Activated CD4-positive, alpha-beta T cell treated with anti-CD3 and anti-CD28 coated beads for 36 hours (primary cell): ENCODE measurements at regions of chr7 and their contacts with region 1.

Region 1: GRCh38 chr7:39732837-39733804 is 109.7 kb downstream of the RALA start:
- DNase-seq: peak; percentile 99
- ATAC-seq: peak; percentile 93
- H3K4me3 Mint-ChIP-seq: peak overlapping the region; percentile 88
- H3K27ac Mint-ChIP-seq: peak overlapping the region; percentile 93
- H3K4me1 Mint-ChIP-seq: peaks cover 31% of the 10 kb centered on the region
- H3K27me3 Mint-ChIP-seq: no peaks in the 10 kb centered on the region

Region 2: DNA sequence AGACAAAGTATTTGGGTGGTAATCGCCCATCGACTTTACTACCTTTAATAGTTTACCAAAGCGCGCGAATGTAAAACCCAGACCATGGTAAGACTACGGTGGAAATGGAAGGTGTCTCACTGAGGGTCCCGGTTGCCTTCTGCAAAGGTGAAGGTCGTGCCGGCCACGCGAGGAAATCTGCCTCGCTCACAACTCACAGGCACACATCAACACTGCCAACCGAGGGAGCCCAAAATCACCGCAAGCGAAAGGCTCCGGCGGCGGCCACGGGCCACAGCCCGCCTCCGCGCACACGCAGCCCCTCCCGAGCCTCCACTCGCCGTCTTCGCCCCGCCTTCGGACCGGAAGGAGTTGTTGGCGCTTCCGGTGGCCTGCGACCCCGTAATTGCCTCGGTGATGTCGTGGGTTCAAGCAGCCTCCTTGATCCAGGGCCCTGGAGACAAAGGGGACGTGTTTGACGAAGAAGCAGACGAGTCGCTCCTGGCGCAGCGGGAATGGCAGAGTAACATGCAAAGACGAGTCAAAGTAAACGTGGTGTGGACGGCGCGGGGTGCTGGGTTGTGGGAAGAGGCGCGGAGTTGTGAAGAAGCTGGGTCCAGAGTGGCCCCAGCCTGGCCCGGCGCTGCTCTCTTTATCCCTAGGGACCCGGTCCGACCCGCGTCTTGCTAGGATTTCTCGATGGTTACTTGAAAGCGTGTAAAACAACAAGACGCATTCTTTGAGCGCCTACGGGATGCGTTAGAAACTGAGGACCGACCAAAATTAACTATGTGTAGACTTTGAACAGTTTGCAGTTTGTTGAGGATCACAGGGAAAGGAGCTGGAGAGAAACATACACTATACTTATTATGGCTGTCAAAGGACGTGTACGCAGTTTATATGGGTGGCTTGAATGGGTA is 166.8 kb before region 1 on chr7 and contains the start of gene YAE1:
- CTCF ChIA-PET with region 1: no interaction called
- POLR2A ChIA-PET with region 1: no interaction called
- intact Hi-C with region 1: loop called in 1 of 2 experiments (anchors 1 kb)
- DNase-seq: peak; percentile 89
- ATAC-seq: peak; percentile 95
- H3K4me3 Mint-ChIP-seq: peak within 1 kb of the TSS; percentile 96
- H3K27ac Mint-ChIP-seq: peak within 1 kb of the TSS; percentile 98
- H3K4me1 Mint-ChIP-seq: peaks cover 14% of the 10 kb centered on the region
- H3K27me3 Mint-ChIP-seq: no peaks in the 10 kb centered on the region
- total RNA-seq, gene YAE1: 9.8 to 13.5 TPM

Region 3: GRCh38 chr7:39589323-39590111 is 143.6 kb before region 1 on chr7:
- CTCF ChIA-PET with region 1: interaction called, 8 read pairs
- POLR2A ChIA-PET with region 1: interaction called, 3 read pairs
- intact Hi-C with region 1: loop called (anchors 1 kb)
- DNase-seq: peak; percentile 84
- ATAC-seq: peak; percentile 85
- H3K4me3 Mint-ChIP-seq: peak overlapping the region; percentile 30
- H3K27ac Mint-ChIP-seq: peak overlapping the region; percentile 43
- H3K4me1 Mint-ChIP-seq: peaks cover 36% of the 10 kb centered on the region
- H3K27me3 Mint-ChIP-seq: no peaks in the 10 kb centered on the region

Region 4: DNA sequence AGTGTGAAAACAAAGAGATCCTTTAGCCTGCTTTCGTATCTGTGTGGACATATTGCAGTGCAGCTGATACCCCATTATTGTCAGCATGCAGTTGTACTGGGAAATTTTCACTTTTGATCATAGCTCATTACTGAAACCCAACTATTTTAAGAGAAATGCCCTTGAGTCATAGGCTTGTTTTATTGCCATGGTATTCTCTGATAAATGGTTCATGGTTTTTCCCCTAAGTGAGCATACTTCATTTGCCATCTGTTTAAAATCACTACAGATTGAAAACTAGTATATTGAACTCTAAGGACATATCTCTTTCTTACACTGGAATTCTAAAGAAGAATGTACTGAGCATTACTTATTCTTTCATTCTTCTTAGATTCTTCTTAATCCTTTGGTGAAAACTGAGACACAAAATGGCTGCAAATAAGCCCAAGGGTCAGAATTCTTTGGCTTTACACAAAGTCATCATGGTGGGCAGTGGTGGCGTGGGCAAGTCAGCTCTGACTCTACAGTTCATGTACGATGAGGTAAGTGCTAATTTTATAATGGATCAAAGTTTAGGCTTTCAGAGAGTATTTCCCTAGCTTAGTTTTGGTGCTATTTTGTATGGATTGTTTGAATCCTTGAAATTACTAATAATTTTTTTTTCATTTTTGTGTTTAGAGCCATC is 46.7 kb before region 1 on chr7:
- CTCF ChIA-PET with region 1: interaction called, 5 read pairs
- POLR2A ChIA-PET with region 1: no interaction called
- intact Hi-C with region 1: loop called in 1 of 2 experiments (anchors 2 kb)
- DNase-seq: peak; percentile 23
- ATAC-seq: peak; percentile 83
- H3K4me3 Mint-ChIP-seq: no peak overlapping the region
- H3K27ac Mint-ChIP-seq: peak overlapping the region; percentile 47
- H3K4me1 Mint-ChIP-seq: peaks cover 55% of the 10 kb centered on the region
- H3K27me3 Mint-ChIP-seq: no peaks in the 10 kb centered on the region

Region 5: DNA sequence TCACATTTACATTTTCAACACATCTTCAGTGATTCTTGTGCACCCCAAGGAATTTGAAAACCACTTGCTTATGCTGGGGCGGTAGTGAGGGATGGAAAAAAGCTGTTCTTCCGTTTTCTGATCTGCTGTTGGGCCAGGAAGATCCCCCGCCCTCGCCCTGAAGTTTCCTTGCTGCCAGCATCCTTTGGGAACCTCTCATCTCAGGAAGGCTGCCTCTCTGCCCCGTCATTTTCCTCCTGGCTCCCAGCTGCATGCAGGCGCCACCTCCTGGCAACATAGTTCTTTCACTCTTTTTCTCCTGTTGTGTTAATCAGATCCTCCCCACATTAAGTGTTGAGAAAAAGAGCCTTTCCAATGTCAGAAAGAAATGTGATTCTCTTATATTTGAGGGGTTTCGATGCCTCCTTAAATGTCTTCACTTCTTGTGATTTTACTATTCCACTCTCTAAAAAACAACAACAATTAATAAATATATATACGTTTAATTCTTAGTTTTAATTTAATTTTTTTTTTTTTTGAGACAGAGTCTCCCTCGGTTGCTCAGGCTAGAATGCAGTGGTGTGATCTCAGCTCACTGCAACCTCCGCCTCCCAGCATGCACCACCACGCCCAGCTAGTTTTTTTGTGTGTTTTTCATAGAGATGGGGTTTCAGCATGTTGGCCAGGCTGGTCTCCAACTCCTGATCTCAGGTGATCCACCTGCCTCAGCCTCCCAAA is 13.1 kb after region 1 on chr7:
- CTCF ChIA-PET with region 1: interaction called, 26 read pairs
- POLR2A ChIA-PET with region 1: interaction called, 3 read pairs
- intact Hi-C with region 1: no loop called
- DNase-seq: peak; percentile 75
- ATAC-seq: peak; percentile 30
- H3K4me3 Mint-ChIP-seq: no peak overlapping the region
- H3K27ac Mint-ChIP-seq: no peak overlapping the region
- H3K4me1 Mint-ChIP-seq: peaks cover 13% of the 10 kb centered on the region
- H3K27me3 Mint-ChIP-seq: no peaks in the 10 kb centered on the region

Region 6: GRCh38 chr7:40134428-40135316 is 401.6 kb after region 1 on chr7 and contains the starts of genes MPLKIP and SUGCT:
- CTCF ChIA-PET with region 1: no interaction called
- POLR2A ChIA-PET with region 1: interaction called, 3 read pairs
- intact Hi-C with region 1: loop called in 1 of 2 experiments (anchors 1 kb)
- DNase-seq: peak; percentile 90
- ATAC-seq: peak; percentile 86
- H3K4me3 Mint-ChIP-seq: peak within 1 kb of the TSS; percentile 80
- H3K27ac Mint-ChIP-seq: peak within 1 kb of the TSS; percentile 92
- H3K4me1 Mint-ChIP-seq: peaks cover 28% of the 10 kb centered on the region
- H3K27me3 Mint-ChIP-seq: peaks cover 3% of the 10 kb centered on the region
- total RNA-seq, gene MPLKIP: 28.5 to 35.2 TPM
- total RNA-seq, gene SUGCT: 1.2 to 1.9 TPM